AG04449 (cell line): ENCODE measurements at regions of chr20 and their contacts with region 1.

Region 1: GRCh38 chr20:41317536-41318270 is at the start of gene ZHX3:
- DNase-seq: peak; percentile 63
- H3K4me3 ChIP-seq: peak within 1 kb of the TSS; percentile 86
- CTCF ChIP-seq: no peak

Region 2: DNA sequence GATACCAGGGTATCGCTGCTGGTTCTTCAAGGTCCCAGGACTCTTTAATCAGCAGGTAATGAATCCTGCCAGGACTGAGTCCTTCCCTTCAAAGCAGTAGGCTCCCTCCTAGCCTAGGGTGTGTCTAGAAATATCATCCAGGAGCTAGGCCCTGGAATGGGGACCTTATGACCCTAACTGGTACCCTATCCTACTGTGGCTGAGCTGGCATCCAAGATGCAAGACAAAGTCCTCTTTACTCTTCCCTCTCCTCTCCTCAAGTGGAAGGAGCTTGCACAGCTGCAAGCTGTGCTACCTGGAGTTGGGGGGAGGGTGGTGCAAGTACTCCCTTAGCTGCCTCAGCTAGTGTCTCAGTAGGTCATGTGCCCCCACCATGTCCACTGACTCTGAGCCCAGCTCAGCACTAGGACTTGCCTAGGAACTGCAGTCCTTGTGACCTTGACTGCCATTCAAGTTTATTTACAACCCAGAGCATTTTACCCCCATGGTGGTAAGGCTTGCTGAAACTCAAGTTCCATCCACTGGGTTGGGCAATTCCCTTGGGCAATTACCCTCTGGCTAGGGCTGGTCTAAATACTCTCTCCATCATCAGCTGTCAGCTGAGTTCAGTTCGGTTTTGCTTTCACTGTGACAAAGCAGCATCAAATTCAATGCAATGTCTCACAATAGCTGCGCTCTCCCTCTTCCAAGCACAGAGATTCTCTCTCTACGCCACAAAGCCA is 337.4 kb before region 1 on chr20:
- CTCF ChIA-PET with region 1: no interaction called
- POLR2A ChIA-PET with region 1: no interaction called
- DNase-seq: no peak
- H3K4me3 ChIP-seq: no peak overlapping the region
- CTCF ChIP-seq: no peak

Region 3: GRCh38 chr20:41329435-41330342 is 12.0 kb after region 1 on chr20:
- CTCF ChIA-PET with region 1: interaction called, 3 read pairs
- POLR2A ChIA-PET with region 1: interaction called, 20 read pairs
- DNase-seq: peak; percentile 98
- H3K4me3 ChIP-seq: no peak overlapping the region
- CTCF ChIP-seq: no peak

Region 4: DNA sequence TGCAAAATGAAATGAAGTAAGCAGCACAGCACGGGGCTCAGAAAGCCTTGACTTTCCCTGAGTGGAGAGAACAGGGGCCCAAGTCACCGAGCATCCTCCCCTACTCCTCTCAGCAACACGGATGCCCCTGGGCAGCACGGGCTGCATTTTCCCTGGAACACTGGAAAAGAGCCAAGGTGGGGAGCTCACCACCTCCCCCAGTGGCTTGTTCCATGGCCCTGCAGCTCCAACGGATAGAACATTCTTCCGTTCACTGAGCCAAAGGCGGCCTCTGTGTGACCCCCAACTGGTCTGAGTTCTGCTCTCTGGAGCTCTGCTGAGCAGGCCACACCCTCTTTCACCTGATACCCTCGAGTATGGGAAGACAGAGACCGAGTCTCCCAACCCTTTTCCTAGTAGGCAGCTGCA is 69.7 kb after region 1 on chr20:
- CTCF ChIA-PET with region 1: no interaction called
- POLR2A ChIA-PET with region 1: no interaction called
- DNase-seq: no peak
- H3K4me3 ChIP-seq: no peak overlapping the region
- CTCF ChIP-seq: no peak

Region 5: DNA sequence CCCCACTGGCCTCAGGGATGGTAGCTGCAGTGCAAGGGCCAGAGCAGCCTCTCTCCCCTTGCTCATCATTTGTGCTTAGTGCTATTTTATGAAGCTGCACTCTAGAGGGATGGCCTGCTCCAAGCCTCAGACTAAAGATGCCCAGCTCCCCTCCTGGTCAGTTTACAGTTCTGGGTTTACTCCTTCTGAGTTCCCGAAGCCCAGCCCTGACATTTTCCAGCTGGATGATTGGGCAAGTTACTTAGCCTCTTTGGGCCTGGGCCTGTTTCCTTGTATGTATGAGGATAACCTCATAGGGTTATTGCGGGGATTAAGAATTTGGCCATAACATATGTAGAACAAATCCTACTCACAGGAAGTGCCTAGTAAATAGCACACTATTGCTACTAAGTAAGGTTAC is 80.7 kb after region 1 on chr20:
- CTCF ChIA-PET with region 1: no interaction called
- POLR2A ChIA-PET with region 1: no interaction called
- DNase-seq: no peak
- H3K4me3 ChIP-seq: no peak overlapping the region
- CTCF ChIP-seq: no peak